Activated CD4-positive, alpha-beta memory T cell treated with anti-CD3 and anti-CD28 coated beads for 36 hours (primary cell): ENCODE measurements at regions of chr14 and their contacts with region 1.

Region 1: GRCh38 chr14:97978341-97978740 is 1181.2 kb downstream of the VRK1 start:
- DNase-seq: peak; percentile 90
- H3K4me3 Mint-ChIP-seq: peak overlapping the region; percentile 84
- H3K27ac Mint-ChIP-seq: peak overlapping the region; percentile 89
- H3K4me1 Mint-ChIP-seq: peaks cover 45% of the 10 kb centered on the region
- H3K27me3 Mint-ChIP-seq: no peaks in the 10 kb centered on the region

Region 2: GRCh38 chr14:97602438-97603117 is 375.8 kb before region 1 on chr14:
- CTCF ChIA-PET with region 1: no interaction called
- POLR2A ChIA-PET with region 1: no interaction called
- intact Hi-C with region 1: loop called (anchors 10 kb)
- DNase-seq: peak; percentile 80
- H3K4me3 Mint-ChIP-seq: no peak overlapping the region
- H3K27ac Mint-ChIP-seq: no peak overlapping the region
- H3K4me1 Mint-ChIP-seq: peaks cover 29% of the 10 kb centered on the region
- H3K27me3 Mint-ChIP-seq: no peaks in the 10 kb centered on the region

Region 3: GRCh38 chr14:97994020-97994531 is 15.7 kb after region 1 on chr14:
- CTCF ChIA-PET with region 1: interaction called, 19 read pairs
- POLR2A ChIA-PET with region 1: interaction called, 7 read pairs
- intact Hi-C with region 1: loop called (anchors 1 kb)
- DNase-seq: peak; percentile 59
- H3K4me3 Mint-ChIP-seq: peak overlapping the region; percentile 34
- H3K27ac Mint-ChIP-seq: peak overlapping the region; percentile 94
- H3K4me1 Mint-ChIP-seq: peaks cover 55% of the 10 kb centered on the region
- H3K27me3 Mint-ChIP-seq: no peaks in the 10 kb centered on the region

Region 4: GRCh38 chr14:98120831-98121464 is 142.6 kb after region 1 on chr14:
- CTCF ChIA-PET with region 1: interaction called, 9 read pairs
- POLR2A ChIA-PET with region 1: no interaction called
- intact Hi-C with region 1: loop called (anchors 5 kb)
- DNase-seq: peak; percentile 39
- H3K4me3 Mint-ChIP-seq: no peak overlapping the region
- H3K27ac Mint-ChIP-seq: no peak overlapping the region
- H3K4me1 Mint-ChIP-seq: peaks cover 26% of the 10 kb centered on the region
- H3K27me3 Mint-ChIP-seq: no peaks in the 10 kb centered on the region

Region 5: DNA sequence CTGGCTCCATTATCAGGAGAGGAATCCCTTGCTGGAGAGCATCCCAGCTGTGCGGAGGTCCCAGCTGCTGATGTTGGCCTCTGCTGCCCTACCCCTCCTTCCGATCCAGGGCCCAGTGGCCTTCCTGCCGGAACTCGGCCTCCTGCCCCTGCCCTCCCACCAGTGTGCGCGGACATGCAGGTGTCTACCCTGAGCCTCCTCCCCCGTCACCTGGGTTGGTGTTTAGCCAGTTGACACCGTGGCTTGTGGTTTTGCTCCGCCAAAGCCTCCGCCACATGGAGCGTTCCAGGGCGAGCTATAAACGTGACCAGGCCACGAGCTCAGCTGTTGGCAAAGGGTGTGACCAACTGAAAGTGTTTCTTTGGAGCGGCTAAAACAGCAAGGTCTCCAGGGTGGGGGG is 189.4 kb after region 1 on chr14:
- CTCF ChIA-PET with region 1: interaction called, 9 read pairs
- POLR2A ChIA-PET with region 1: interaction called, 11 read pairs
- intact Hi-C with region 1: no loop called
- DNase-seq: peak; percentile 54
- H3K4me3 Mint-ChIP-seq: peak overlapping the region; percentile 17
- H3K27ac Mint-ChIP-seq: peak overlapping the region; percentile 97
- H3K4me1 Mint-ChIP-seq: peaks cover 67% of the 10 kb centered on the region
- H3K27me3 Mint-ChIP-seq: no peaks in the 10 kb centered on the region

Region 6: GRCh38 chr14:98931911-98932310 is 953.6 kb after region 1 on chr14:
- CTCF ChIA-PET with region 1: no interaction called
- POLR2A ChIA-PET with region 1: no interaction called
- intact Hi-C with region 1: loop called (anchors 10 kb)
- DNase-seq: peak; percentile 81
- H3K4me3 Mint-ChIP-seq: peak overlapping the region; percentile 49
- H3K27ac Mint-ChIP-seq: peak overlapping the region; percentile 71
- H3K4me1 Mint-ChIP-seq: peaks cover 58% of the 10 kb centered on the region
- H3K27me3 Mint-ChIP-seq: no peaks in the 10 kb centered on the region